Mammary epithelial cell (primary cell): ENCODE measurements at regions of chr12 and their contacts with region 1.

Region 1: DNA sequence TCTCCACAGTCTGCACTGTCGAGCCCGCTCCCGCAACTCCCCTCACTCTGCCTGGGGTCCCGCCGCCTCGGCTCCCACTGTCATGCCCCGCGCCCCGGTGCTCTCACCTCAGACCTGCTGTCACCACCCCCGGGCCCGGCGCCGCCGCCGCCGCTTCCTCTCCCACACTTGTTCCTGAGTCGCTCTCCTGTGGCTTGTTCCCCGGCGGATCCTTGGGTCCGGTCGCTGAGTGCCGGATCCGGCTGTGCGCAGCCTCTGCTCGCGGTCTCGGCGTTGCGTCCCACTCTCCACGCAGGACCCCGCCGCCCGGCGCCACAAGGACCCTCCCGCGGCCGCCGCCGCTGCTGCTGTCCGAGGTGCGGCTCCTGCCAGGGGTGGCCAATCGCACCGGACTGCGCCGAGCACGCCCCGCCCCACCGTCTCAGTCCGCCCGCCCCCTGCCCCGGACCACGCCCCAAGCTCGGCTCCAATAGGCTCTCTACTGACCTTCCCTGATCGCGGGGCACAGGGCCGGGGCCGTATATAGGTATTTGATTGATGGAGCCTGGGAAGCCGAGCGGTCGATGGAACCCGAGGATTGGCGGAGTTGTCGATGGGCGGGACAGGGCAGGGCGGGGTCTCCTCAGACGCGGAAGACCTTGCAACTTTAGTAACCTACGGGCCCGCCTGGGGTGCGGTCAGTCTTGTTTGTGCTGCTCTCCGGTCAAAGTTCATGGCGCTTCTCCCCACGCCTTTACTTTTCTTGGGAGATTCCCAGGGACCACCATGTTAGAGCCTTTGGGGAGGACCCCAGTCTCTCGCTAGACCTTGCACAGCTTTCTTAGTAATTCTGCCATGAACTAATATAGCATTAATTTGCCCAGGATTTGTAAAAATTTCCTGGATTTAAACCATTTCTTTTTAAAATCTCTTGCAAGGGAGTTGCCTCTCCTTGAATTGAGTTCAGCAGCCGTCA is at the start of gene TAOK3:
- DNase-seq: peak; percentile 98
- H3K4me3 ChIP-seq: peak within 1 kb of the TSS; percentile 97 to 100 (median 98)
- H3K27ac ChIP-seq: peak within 1 kb of the TSS; percentile 72
- H3K4me1 ChIP-seq: peaks cover 28% of the 10 kb centered on the region
- H3K27me3 ChIP-seq: no peaks in the 10 kb centered on the region
- CTCF ChIP-seq: no peak
- total RNA-seq, gene TAOK3: 35.5 to 53.4 TPM

Region 2: DNA sequence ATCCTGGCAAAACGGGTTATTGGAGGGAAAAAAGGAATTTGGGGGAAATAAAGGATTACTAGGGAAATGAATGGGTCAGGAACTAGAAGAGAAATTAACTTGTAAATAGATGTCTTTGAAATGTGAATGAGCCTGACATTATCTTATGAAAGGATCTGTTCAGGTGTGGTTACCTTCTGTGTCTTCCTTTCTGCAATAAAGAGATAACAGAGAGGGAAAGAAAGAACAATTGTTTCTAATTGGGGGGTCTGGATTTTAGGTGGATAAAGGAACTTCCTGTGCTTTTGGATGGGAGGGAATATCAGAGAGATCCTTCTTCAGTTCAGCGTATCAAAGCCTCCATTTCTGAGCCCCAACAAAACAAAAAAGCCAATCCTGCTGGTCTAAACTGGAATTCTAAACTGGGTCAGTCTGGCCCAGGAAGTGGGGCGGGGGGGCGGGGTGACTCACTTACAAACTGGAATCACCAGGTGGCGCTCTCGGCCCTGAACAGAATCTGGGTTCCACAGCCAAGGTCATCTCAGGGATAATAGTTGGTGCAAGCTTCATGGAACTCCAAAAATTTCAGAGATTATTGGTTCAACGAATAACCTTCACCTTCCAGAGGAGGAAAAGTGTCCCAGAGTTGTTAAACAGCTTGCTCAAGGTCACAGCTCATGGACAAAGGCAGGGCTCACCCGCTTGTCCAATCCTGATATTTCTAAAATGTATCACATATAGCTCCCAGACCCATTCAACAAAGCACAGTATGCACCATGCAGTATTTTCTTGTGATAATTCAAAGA is 252.0 kb before region 1 on chr12:
- CTCF ChIA-PET with region 1: interaction called, 29 read pairs
- dilution Hi-C with region 1: no loop called
- in situ Hi-C with region 1: no loop called
- intact Hi-C with region 1: loop called (anchors 1 kb)
- DNase-seq: peak; percentile 40
- H3K4me3 ChIP-seq: no peak overlapping the region
- H3K27ac ChIP-seq: no peak overlapping the region
- H3K4me1 ChIP-seq: peaks cover 3% of the 10 kb centered on the region
- H3K27me3 ChIP-seq: no peaks in the 10 kb centered on the region
- CTCF ChIP-seq: peak; percentile 37 to 64

Region 3: DNA sequence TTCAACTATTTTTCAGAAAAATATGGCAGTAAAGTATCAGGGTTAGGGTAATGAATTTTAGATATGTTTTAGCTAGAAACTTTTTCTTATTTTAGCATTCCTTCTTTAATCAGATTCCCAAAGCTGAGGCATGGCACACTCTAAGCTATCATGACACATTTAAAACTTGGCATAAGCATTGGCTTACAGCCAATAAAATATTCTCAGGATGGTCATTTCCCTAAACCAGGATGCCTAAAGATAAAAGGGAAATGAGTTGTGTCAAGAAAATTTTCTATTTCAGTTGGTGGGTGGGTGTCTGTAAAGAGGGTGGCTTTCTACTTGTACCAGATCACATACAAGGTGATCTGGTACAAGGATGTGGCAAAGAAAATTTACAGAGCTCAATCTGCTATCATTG is 189.1 kb before region 1 on chr12:
- CTCF ChIA-PET with region 1: interaction called, 8 read pairs
- dilution Hi-C with region 1: loop called (anchors 5 kb)
- in situ Hi-C with region 1: loop called (anchors 5 to 10 kb)
- intact Hi-C with region 1: loop called (anchors 1 kb)
- DNase-seq: no peak
- H3K4me3 ChIP-seq: no peak overlapping the region
- H3K27ac ChIP-seq: no peak overlapping the region
- H3K4me1 ChIP-seq: peaks cover 15% of the 10 kb centered on the region
- H3K27me3 ChIP-seq: no peaks in the 10 kb centered on the region
- CTCF ChIP-seq: no peak

Region 4: DNA sequence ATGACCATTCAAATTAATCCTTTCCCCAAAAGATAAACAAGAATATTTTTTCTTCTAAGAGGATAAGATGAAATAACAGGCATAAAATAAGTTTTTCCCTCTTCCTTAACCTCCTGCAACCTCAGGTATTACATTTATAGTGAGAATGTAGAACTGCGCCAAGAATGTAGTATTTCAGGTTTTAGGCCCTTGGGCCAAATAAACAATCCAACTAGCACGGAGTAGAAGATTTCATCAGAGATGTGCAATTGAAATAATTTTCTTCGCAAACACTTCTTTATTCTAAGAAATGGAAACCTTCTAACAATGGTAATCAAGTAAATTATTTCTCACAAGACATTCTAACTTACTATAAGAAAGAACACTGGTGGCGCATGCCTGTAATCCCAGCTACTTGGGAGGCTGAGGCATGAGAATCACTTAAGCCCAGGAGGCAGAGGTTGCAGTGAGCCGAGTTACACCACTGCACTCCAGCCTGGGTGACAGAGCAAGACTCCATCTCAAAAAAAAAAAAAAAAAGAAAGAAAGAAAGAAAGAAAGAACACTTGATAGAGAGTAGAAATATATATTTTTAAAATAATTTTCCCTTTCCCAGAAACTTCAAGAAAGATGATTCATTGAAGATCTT is 100.9 kb before region 1 on chr12:
- CTCF ChIA-PET with region 1: no interaction called
- dilution Hi-C with region 1: no loop called
- in situ Hi-C with region 1: loop called in 1 of 2 experiments (anchors 25 kb)
- intact Hi-C with region 1: loop called (anchors 1 kb)
- DNase-seq: peak; percentile 83
- H3K4me3 ChIP-seq: peak overlapping the region in 2 of 3 experiments; percentile 24 to 40
- H3K27ac ChIP-seq: peak overlapping the region; percentile 77
- H3K4me1 ChIP-seq: peaks cover 16% of the 10 kb centered on the region
- H3K27me3 ChIP-seq: no peaks in the 10 kb centered on the region
- CTCF ChIP-seq: no peak

Region 5: GRCh38 chr12:118357257-118358007 is 15.4 kb before region 1 on chr12:
- CTCF ChIA-PET with region 1: no interaction called
- dilution Hi-C with region 1: no loop called
- in situ Hi-C with region 1: no loop called
- intact Hi-C with region 1: loop called (anchors 1 kb)
- DNase-seq: peak; percentile 54
- H3K4me3 ChIP-seq: no peak overlapping the region
- H3K27ac ChIP-seq: peak overlapping the region; percentile 94
- H3K4me1 ChIP-seq: peaks cover 28% of the 10 kb centered on the region
- H3K27me3 ChIP-seq: no peaks in the 10 kb centered on the region
- CTCF ChIP-seq: peak in 1 of 2 donors; percentile 15

Region 6: GRCh38 chr12:118625050-118625675 is 252.3 kb after region 1 on chr12:
- CTCF ChIA-PET with region 1: no interaction called
- dilution Hi-C with region 1: no loop called
- in situ Hi-C with region 1: no loop called
- intact Hi-C with region 1: no loop called
- DNase-seq: no peak
- H3K4me3 ChIP-seq: no peak overlapping the region
- H3K27ac ChIP-seq: no peak overlapping the region
- H3K4me1 ChIP-seq: no peaks in the 10 kb centered on the region
- H3K27me3 ChIP-seq: no peaks in the 10 kb centered on the region
- CTCF ChIP-seq: no peak